CD4-positive, alpha-beta T cell (primary cell): ENCODE measurements at regions of chr17 and their contacts with region 1.

Region 1: GRCh38 chr17:49180303-49180702 is 30.1 kb downstream of the GNGT2 start:
- DNase-seq: peak; percentile 40 to 83 (median 62)
- ATAC-seq: peak; percentile 44
- H3K4me3 ChIP-seq: no peak overlapping the region
- H3K4me3 Mint-ChIP-seq: no peak overlapping the region
- H3K27ac ChIP-seq: no peak overlapping the region
- H3K27ac Mint-ChIP-seq: no peak overlapping the region
- H3K4me1 ChIP-seq: peaks cover 5% of the 10 kb centered on the region
- H3K4me1 Mint-ChIP-seq: peaks cover 5% of the 10 kb centered on the region
- H3K27me3 ChIP-seq: no peaks in the 10 kb centered on the region
- H3K27me3 Mint-ChIP-seq: peaks cover 1% of the 10 kb centered on the region
- CTCF ChIP-seq: peak; percentile 89

Region 2: DNA sequence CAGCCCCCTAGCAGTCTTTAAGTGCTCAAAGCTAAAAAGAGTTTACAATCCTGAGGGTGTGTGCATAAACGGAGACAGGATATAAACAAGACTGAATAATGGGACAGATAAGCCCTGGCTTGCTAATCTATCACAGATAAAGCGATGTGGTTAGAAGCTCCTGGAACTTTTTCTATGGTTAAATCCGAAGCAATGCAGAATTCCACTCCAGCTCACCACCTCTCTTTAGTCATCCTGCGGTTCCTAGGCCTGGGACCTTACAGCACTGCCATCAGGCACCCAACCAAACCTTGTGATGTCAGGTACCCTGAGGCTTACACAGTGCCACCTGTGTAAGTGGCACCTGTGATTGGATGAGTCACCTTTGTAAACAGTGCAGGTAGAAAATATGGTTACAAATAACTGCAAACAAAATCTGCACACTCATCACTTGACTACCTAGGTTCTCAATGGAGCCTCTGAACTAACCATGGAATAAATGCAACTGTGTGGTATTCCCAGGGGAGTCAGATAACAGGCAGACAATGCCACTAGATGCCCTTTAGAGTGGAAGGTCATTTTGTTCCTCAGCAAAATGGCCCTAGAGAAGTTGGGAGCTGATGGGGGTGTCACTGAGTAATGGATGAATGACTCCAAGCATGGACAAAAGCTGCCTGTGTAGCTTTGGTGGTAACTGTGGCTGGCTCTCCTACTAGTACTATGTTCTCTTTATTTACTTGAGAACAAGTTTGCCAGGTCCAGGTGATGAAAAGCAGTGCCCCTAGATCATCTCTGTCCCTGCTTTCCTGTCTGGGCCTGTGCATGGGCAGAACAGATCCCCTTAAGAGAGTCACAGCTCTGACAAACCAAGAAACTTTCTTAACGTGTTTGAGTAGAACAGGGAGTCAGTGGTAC is 79.0 kb before region 1 on chr17:
- CTCF ChIA-PET with region 1: no interaction called
- POLR2A ChIA-PET with region 1: no interaction called
- intact Hi-C with region 1: no loop called
- DNase-seq: no peak
- ATAC-seq: no peak
- H3K4me3 ChIP-seq: no peak overlapping the region
- H3K4me3 Mint-ChIP-seq: no peak overlapping the region
- H3K27ac ChIP-seq: no peak overlapping the region
- H3K27ac Mint-ChIP-seq: no peak overlapping the region
- H3K4me1 ChIP-seq: no peaks in the 10 kb centered on the region
- H3K4me1 Mint-ChIP-seq: no peaks in the 10 kb centered on the region
- H3K27me3 ChIP-seq: no peaks in the 10 kb centered on the region
- H3K27me3 Mint-ChIP-seq: peaks cover 17% of the 10 kb centered on the region
- CTCF ChIP-seq: no peak

Region 3: DNA sequence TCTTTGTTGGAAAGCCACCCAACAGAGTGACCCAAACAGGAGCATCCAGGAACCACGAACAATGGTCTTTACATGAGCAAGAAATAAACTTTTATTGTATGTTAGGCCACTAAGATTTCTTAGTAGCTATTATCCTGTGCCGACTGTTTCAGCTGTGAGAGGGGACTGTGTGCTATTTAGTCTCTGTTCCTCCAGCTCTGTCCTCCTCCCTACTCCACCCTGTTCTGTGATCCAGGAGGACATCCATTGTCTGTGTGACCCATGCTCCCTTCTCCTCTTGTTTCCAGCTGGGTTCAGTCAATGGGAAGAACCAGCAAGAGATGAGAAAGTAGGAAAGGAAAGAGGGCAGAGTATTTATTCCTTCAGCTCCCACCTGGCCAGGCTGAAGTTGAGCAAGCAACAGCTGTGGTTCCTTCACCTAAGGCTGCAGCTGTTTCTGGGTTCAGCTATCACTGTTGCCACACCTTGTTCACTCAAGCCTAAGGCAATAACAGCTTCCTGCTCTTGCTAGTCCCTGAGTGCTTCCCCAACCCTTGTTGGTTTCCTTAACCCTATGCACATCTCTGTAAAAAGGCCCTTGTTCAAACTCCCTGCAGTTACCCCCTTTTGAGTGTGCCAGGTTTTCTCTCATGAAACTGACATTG is 62.6 kb before region 1 on chr17:
- CTCF ChIA-PET with region 1: no interaction called
- POLR2A ChIA-PET with region 1: no interaction called
- intact Hi-C with region 1: no loop called
- DNase-seq: no peak
- ATAC-seq: no peak
- H3K4me3 ChIP-seq: no peak overlapping the region
- H3K4me3 Mint-ChIP-seq: no peak overlapping the region
- H3K27ac ChIP-seq: no peak overlapping the region
- H3K27ac Mint-ChIP-seq: no peak overlapping the region
- H3K4me1 ChIP-seq: no peaks in the 10 kb centered on the region
- H3K4me1 Mint-ChIP-seq: no peaks in the 10 kb centered on the region
- H3K27me3 ChIP-seq: peaks cover 11 to 14% of the 10 kb centered on the region in 2 experiments
- H3K27me3 Mint-ChIP-seq: peaks cover 61% of the 10 kb centered on the region
- CTCF ChIP-seq: no peak

Region 4: DNA sequence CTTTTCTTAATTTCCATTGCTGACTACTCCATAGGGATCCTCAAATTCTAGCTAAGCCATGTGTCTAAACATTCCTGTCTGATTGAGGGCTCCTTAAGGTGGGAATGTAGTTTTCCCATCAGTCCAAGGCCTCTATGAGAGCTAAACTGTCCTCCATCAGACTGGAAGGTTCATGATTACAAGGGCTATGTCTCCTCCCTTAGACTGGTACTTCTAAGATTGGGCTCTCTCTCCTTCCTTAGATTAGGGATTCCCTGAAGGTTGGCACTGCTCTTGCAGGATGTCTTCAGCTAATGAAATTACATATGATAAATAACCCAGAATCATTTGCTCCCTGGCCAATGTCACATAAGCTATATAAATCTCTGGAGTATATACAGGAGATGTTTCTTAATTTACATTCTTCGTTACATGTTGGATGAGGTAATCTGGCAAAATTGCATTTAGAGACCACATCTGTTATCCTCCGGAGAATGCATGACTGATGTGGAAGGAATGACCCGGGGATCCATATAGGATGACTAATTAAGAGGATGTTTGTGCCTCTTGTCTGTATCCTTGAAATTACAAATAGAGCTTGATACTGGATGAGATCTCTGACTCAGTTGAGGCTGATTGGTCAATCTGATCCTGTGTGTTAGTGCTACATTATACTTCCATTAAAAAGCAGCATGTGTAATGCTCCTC is 33.5 kb before region 1 on chr17:
- CTCF ChIA-PET with region 1: no interaction called
- POLR2A ChIA-PET with region 1: no interaction called
- intact Hi-C with region 1: no loop called
- DNase-seq: no peak
- ATAC-seq: no peak
- H3K4me3 ChIP-seq: no peak overlapping the region
- H3K4me3 Mint-ChIP-seq: no peak overlapping the region
- H3K27ac ChIP-seq: no peak overlapping the region
- H3K27ac Mint-ChIP-seq: no peak overlapping the region
- H3K4me1 ChIP-seq: no peaks in the 10 kb centered on the region
- H3K4me1 Mint-ChIP-seq: no peaks in the 10 kb centered on the region
- H3K27me3 ChIP-seq: peaks cover 7 to 15% of the 10 kb centered on the region in 2 experiments
- H3K27me3 Mint-ChIP-seq: peaks cover 63% of the 10 kb centered on the region
- CTCF ChIP-seq: no peak

Region 5: DNA sequence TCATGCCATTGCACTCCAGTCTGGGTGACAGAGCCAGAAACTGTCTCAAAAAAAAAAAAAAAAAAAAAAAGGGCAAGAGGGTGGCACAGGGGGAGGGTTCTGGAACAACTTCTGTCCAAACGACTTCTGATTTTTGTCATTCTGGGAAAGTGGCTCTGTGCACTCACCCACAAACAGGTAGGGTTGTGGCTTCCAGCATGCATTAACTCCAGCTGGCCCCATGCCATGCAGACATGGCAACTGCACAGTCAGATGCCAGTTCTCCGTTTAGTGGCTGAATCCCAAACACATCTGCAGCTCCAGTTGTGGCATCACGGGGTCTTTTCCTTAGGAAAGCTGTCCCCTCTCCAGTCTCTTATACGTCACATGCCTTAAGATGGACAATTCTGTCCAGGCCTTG is 17.4 kb before region 1 on chr17:
- CTCF ChIA-PET with region 1: no interaction called
- POLR2A ChIA-PET with region 1: no interaction called
- intact Hi-C with region 1: no loop called
- DNase-seq: no peak
- ATAC-seq: no peak
- H3K4me3 ChIP-seq: no peak overlapping the region
- H3K4me3 Mint-ChIP-seq: no peak overlapping the region
- H3K27ac ChIP-seq: no peak overlapping the region
- H3K27ac Mint-ChIP-seq: no peak overlapping the region
- H3K4me1 ChIP-seq: no peaks in the 10 kb centered on the region
- H3K4me1 Mint-ChIP-seq: no peaks in the 10 kb centered on the region
- H3K27me3 ChIP-seq: peaks cover 9 to 17% of the 10 kb centered on the region in 2 experiments
- H3K27me3 Mint-ChIP-seq: peaks cover 47% of the 10 kb centered on the region
- CTCF ChIP-seq: no peak

Region 6: DNA sequence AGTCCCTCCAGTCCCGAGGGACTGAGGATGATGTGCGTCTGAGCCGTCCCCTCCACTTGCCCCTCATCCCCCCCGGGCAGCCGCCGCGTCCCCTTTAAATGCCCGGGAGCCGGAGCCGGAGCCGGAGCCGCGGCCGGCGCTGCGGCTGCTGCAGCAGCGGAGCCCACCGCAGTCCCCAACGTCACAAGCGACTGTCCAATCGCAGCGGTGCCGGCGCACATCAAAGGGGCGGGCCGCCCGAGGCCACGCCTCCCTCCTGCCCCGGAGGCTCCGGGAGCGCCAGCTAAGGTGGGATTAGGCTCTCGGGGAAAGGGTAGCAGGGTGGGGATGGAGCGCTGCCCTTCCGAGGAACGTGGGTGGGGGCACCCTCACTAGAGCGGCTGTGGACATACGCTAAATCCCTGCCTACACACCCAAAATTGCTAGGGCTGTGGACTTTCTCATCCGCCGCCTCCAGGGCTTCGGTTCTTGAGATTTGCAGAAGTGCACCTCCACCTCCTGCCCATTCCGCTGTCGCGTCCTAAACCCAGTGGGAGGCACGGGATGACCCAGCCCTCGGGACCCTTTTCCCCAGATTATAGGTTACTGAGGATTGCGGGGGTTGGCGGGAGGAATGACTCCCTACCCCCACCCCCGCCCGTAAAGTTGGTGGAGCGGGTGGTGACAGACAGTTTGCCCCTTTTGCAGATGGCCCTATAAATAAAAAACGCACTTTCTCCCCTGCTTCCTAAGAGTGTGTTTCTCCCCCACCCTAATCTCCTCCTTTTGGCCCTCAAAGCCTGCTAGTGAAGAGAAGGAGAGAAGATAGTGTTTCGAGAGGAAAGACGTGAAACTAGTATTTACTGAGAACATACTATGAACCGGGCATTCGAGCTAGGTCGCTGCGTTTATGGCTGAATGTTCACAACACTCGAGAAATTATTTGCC is 50.6 kb after region 1 on chr17 and contains the start of gene PHOSPHO1:
- CTCF ChIA-PET with region 1: interaction called, 48 read pairs
- POLR2A ChIA-PET with region 1: interaction called, 7 read pairs
- intact Hi-C with region 1: loop called (anchors 1 kb)
- DNase-seq: peak; percentile 70 to 94 (median 82)
- ATAC-seq: peak; percentile 93
- H3K4me3 ChIP-seq: peak within 1 kb of the TSS; percentile 78
- H3K4me3 Mint-ChIP-seq: peak within 1 kb of the TSS; percentile 84
- H3K27ac ChIP-seq: no peak within 1 kb of the TSS
- H3K27ac Mint-ChIP-seq: peak within 1 kb of the TSS; percentile 19
- H3K4me1 ChIP-seq: peaks cover 28% of the 10 kb centered on the region
- H3K4me1 Mint-ChIP-seq: peaks cover 11% of the 10 kb centered on the region
- H3K27me3 ChIP-seq: peaks cover 12 to 16% of the 10 kb centered on the region in 2 experiments
- H3K27me3 Mint-ChIP-seq: peaks cover 16% of the 10 kb centered on the region
- CTCF ChIP-seq: no peak
- total RNA-seq, gene PHOSPHO1: not detected

Region 7: DNA sequence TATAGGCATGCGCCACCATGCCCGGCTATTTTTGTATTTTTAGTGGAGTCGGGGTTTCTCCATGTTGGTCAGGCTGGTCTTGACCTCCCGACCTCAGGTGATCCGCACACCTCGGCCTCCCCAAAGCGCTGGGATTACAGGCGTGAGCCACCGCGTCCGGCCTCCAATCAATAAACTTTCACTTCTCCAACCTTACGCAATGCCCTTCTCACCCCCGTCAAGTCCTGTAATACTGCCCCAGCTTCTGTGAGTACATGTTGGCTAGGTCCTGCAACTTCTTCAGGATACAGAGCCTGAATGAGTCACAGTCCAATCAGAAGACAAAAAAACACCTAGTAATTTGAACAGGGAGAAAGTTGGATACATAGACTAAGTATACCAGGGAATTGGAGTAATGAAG is 97.3 kb after region 1 on chr17:
- CTCF ChIA-PET with region 1: no interaction called
- POLR2A ChIA-PET with region 1: no interaction called
- intact Hi-C with region 1: loop called in 1 of 2 experiments (anchors 5 kb)
- DNase-seq: no peak
- ATAC-seq: no peak
- H3K4me3 ChIP-seq: no peak overlapping the region
- H3K4me3 Mint-ChIP-seq: no peak overlapping the region
- H3K27ac ChIP-seq: no peak overlapping the region
- H3K27ac Mint-ChIP-seq: no peak overlapping the region
- H3K4me1 ChIP-seq: no peaks in the 10 kb centered on the region
- H3K4me1 Mint-ChIP-seq: no peaks in the 10 kb centered on the region
- H3K27me3 ChIP-seq: no peaks in the 10 kb centered on the region
- H3K27me3 Mint-ChIP-seq: peaks cover 4% of the 10 kb centered on the region
- CTCF ChIP-seq: no peak

Region 8: GRCh38 chr17:49290690-49291359 is 110.5 kb after region 1 on chr17:
- CTCF ChIA-PET with region 1: interaction called, 14 read pairs
- POLR2A ChIA-PET with region 1: no interaction called
- intact Hi-C with region 1: loop called (anchors 2 kb)
- DNase-seq: peak in 5 of 14 experiments; percentile 3 to 45 (median 11)
- ATAC-seq: peak; percentile 37
- H3K4me3 ChIP-seq: no peak overlapping the region
- H3K4me3 Mint-ChIP-seq: no peak overlapping the region
- H3K27ac ChIP-seq: no peak overlapping the region
- H3K27ac Mint-ChIP-seq: no peak overlapping the region
- H3K4me1 ChIP-seq: no peaks in the 10 kb centered on the region
- H3K4me1 Mint-ChIP-seq: no peaks in the 10 kb centered on the region
- H3K27me3 ChIP-seq: no peaks in the 10 kb centered on the region
- H3K27me3 Mint-ChIP-seq: no peaks in the 10 kb centered on the region
- CTCF ChIP-seq: peak; percentile 49

Region 9: GRCh38 chr17:49399995-49400394 is 219.7 kb after region 1 on chr17:
- CTCF ChIA-PET with region 1: no interaction called
- POLR2A ChIA-PET with region 1: no interaction called
- intact Hi-C with region 1: loop called in 1 of 2 experiments (anchors 5 kb)
- DNase-seq: no peak
- ATAC-seq: no peak
- H3K4me3 ChIP-seq: no peak overlapping the region
- H3K4me3 Mint-ChIP-seq: no peak overlapping the region
- H3K27ac ChIP-seq: no peak overlapping the region
- H3K27ac Mint-ChIP-seq: no peak overlapping the region
- H3K4me1 ChIP-seq: peaks cover 14% of the 10 kb centered on the region
- H3K4me1 Mint-ChIP-seq: peaks cover 13% of the 10 kb centered on the region
- H3K27me3 ChIP-seq: no peaks in the 10 kb centered on the region
- H3K27me3 Mint-ChIP-seq: no peaks in the 10 kb centered on the region
- CTCF ChIP-seq: no peak